SK-N-SH (cell line): ENCODE measurements at regions of chr7 and their contacts with region 1.

Region 1: GRCh38 chr7:155598810-155599210 is 45.7 kb upstream of the RBM33 start:
- DNase-seq: peak; percentile 88
- H3K4me3 ChIP-seq: peak overlapping the region in 1 of 2 experiments; percentile 11; a peak in 1 of 4 replicates
- H3K27ac ChIP-seq: no peak overlapping the region
- H3K4me1 ChIP-seq: peaks cover 0 to 3% of the 10 kb centered on the region in 2 experiments; a peak in 1 of 4 replicates
- H3K27me3 ChIP-seq: peaks cover 27% of the 10 kb centered on the region; the same call in 1 of the 2 replicates
- CTCF ChIP-seq: peak; percentile 100
- EP300 ChIP-seq: no peak
- RAD21 ChIP-seq: peak; percentile 90

Region 2: DNA sequence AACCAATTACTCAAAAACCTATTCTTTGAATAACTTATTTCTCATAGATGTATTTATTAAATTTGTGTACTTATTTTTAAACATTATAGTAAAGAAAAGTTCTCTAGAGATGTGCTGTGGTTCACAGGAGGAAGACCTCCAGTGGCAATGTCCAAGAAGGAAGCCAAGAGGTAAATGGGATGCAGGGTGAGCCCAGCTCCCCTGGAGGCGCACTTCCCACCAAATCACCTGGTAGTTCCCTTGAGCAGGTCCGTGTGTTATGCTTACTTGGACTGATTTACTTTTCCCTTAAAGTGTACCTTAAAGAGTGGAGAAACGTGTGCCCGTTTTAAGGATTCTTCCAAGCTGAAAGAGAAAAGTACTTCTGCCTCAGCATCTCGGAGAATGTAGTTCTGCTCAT is 651.2 kb before region 1 on chr7:
- CTCF ChIA-PET with region 1: no interaction called
- POLR2A ChIA-PET with region 1: no interaction called
- DNase-seq: no peak
- H3K4me3 ChIP-seq: no peak overlapping the region
- H3K27ac ChIP-seq: no peak overlapping the region
- H3K4me1 ChIP-seq: no peaks in the 10 kb centered on the region; a peak in 2 of 4 replicates
- H3K27me3 ChIP-seq: no peaks in the 10 kb centered on the region
- CTCF ChIP-seq: no peak
- EP300 ChIP-seq: no peak
- RAD21 ChIP-seq: no peak

Region 3: GRCh38 chr7:155493744-155494538 is 104.9 kb before region 1 on chr7:
- CTCF ChIA-PET with region 1: no interaction called
- POLR2A ChIA-PET with region 1: no interaction called
- DNase-seq: no peak
- H3K4me3 ChIP-seq: no peak overlapping the region
- H3K27ac ChIP-seq: no peak overlapping the region
- H3K4me1 ChIP-seq: no peaks in the 10 kb centered on the region
- H3K27me3 ChIP-seq: peaks cover 91% of the 10 kb centered on the region
- CTCF ChIP-seq: no peak
- EP300 ChIP-seq: no peak
- RAD21 ChIP-seq: no peak

Region 4: GRCh38 chr7:155524018-155524616 is 74.7 kb before region 1 on chr7:
- CTCF ChIA-PET with region 1: interaction called, 12 read pairs
- POLR2A ChIA-PET with region 1: no interaction called
- DNase-seq: no peak
- H3K4me3 ChIP-seq: no peak overlapping the region
- H3K27ac ChIP-seq: no peak overlapping the region
- H3K4me1 ChIP-seq: no peaks in the 10 kb centered on the region
- H3K27me3 ChIP-seq: peaks cover 78% of the 10 kb centered on the region
- CTCF ChIP-seq: no peak
- EP300 ChIP-seq: no peak
- RAD21 ChIP-seq: no peak

Region 5: GRCh38 chr7:155620497-155620896 is 21.7 kb after region 1 on chr7:
- CTCF ChIA-PET with region 1: interaction called, 23 read pairs
- POLR2A ChIA-PET with region 1: no interaction called
- DNase-seq: no peak
- H3K4me3 ChIP-seq: no peak overlapping the region
- H3K27ac ChIP-seq: no peak overlapping the region
- H3K4me1 ChIP-seq: no peaks in the 10 kb centered on the region
- H3K27me3 ChIP-seq: peaks cover 45% of the 10 kb centered on the region
- CTCF ChIP-seq: no peak
- EP300 ChIP-seq: no peak
- RAD21 ChIP-seq: no peak

Region 6: DNA sequence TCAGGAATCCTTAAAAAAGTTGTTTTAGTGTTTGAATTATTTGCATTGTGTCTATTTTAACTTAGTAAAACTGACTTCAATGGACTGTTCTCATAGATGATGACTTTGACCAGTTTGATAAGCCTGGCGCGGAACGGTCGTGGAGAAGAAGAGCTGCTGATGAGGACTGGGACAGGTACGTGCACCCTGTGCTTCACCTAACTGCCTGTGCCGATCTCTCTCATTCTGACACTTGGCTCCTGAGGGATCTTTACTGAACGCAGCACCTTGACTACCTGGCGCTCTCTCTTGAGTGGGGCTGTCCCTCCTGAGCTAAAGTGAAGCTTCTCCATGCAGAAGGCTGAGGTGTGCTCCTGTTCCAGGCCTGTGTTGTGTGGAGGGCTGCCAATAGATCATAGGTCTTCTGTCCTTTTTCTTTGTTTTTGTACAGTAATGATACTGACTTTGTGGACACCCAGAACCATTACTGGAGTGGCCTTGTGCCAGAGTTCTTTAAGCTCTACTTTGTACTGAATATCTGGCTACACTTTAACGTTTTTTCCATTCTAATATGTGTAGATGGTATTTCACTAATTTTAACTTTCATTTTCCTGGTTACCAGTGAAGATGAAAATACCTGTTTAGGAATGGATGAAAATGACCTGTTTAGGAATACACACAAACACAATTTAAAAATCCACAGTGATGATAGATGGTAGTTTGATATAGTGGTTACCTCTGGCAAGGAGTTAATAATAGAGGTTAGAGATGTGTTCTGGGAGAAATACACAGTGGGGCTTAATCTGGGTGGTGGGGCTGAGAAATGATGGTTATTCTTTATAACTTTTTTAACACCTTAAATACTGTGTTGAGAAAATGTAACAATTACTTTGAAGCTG is 66.5 kb after region 1 on chr7:
- CTCF ChIA-PET with region 1: interaction called, 15 read pairs
- POLR2A ChIA-PET with region 1: no interaction called
- DNase-seq: no peak
- H3K4me3 ChIP-seq: peak overlapping the region in 1 of 2 experiments; percentile 3; a peak in 1 of 4 replicates
- H3K27ac ChIP-seq: peak overlapping the region; percentile 7 to 85; a peak in 3 of 4 replicates
- H3K4me1 ChIP-seq: peaks cover 14 to 15% of the 10 kb centered on the region in 2 experiments; a peak in 3 of 4 replicates
- H3K27me3 ChIP-seq: no peaks in the 10 kb centered on the region
- CTCF ChIP-seq: no peak
- EP300 ChIP-seq: no peak
- RAD21 ChIP-seq: no peak

Region 7: GRCh38 chr7:155724327-155725005 is 125.7 kb after region 1 on chr7:
- CTCF ChIA-PET with region 1: interaction called, 470 read pairs
- POLR2A ChIA-PET with region 1: no interaction called
- DNase-seq: peak; percentile 58
- H3K4me3 ChIP-seq: no peak overlapping the region
- H3K27ac ChIP-seq: no peak overlapping the region
- H3K4me1 ChIP-seq: peaks cover 0 to 10% of the 10 kb centered on the region in 2 experiments; a peak in 2 of 4 replicates
- H3K27me3 ChIP-seq: no peaks in the 10 kb centered on the region
- CTCF ChIP-seq: peak; percentile 40; the same call in 1 of the 2 replicates
- EP300 ChIP-seq: no peak
- RAD21 ChIP-seq: peak; percentile 22; the same call in 1 of the 2 replicates

Region 8: GRCh38 chr7:155769701-155770100 is 170.9 kb after region 1 on chr7:
- CTCF ChIA-PET with region 1: interaction called, 103 read pairs
- POLR2A ChIA-PET with region 1: no interaction called
- DNase-seq: no peak
- H3K4me3 ChIP-seq: no peak overlapping the region
- H3K27ac ChIP-seq: no peak overlapping the region
- H3K4me1 ChIP-seq: peaks cover 0 to 8% of the 10 kb centered on the region in 2 experiments; a peak in 1 of 4 replicates
- H3K27me3 ChIP-seq: no peaks in the 10 kb centered on the region
- CTCF ChIP-seq: no peak
- EP300 ChIP-seq: no peak
- RAD21 ChIP-seq: no peak